ENCODE measurements at regions of chr7 and their contacts with region 1.

Region 1: DNA sequence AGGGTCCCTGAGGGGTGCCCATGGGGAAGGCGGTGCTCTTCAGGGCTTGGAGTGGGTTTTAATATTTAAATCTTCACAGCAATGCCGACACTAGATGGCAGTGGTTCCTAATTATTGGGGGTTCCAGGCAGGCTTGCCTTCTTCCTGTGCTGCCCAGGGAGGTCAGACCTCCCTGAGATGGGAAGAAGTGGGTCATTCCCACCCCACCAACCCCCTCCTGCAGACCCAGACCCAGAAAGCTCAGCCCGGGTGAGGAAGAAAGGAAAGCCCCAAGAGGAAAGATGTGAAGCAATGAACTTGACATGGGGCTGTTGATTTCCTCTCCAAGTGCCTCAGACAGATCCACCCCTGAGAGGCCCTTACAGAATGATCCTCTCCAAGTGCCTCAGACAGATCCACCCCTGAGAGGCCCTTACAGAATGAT is 85.1 kb upstream of the LANCL2 start:
- DNase-seq: peak; percentile 31 to 81
- H3K4me3 ChIP-seq: no peak overlapping the region
- H3K27ac ChIP-seq: no peak overlapping the region
- H3K4me1 ChIP-seq: no peaks in the 10 kb centered on the region
- H3K27me3 ChIP-seq: no peaks in the 10 kb centered on the region
- CTCF ChIP-seq: peak; percentile 30 to 85 (median 67)
- EP300 ChIP-seq: no peak
- POLR2A ChIP-seq: no peak
- RAD21 ChIP-seq: peak; percentile 95

Region 2: GRCh38 chr7:55206235-55207029 is 73.6 kb before region 1 on chr7:
- CTCF ChIA-PET with region 1: no interaction called
- POLR2A ChIA-PET with region 1: no interaction called
- DNase-seq: no peak
- H3K4me3 ChIP-seq: no peak overlapping the region
- H3K27ac ChIP-seq: no peak overlapping the region
- H3K4me1 ChIP-seq: no peaks in the 10 kb centered on the region
- H3K27me3 ChIP-seq: no peaks in the 10 kb centered on the region
- CTCF ChIP-seq: no peak
- EP300 ChIP-seq: no peak
- POLR2A ChIP-seq: no peak
- RAD21 ChIP-seq: no peak

Region 3: GRCh38 chr7:55415173-55415778 is 135.2 kb after region 1 on chr7:
- CTCF ChIA-PET with region 1: interaction called, 17 read pairs
- POLR2A ChIA-PET with region 1: no interaction called
- DNase-seq: peak; percentile 38 to 91
- H3K4me3 ChIP-seq: no peak overlapping the region
- H3K27ac ChIP-seq: no peak overlapping the region
- H3K4me1 ChIP-seq: no peaks in the 10 kb centered on the region
- H3K27me3 ChIP-seq: no peaks in the 10 kb centered on the region
- CTCF ChIP-seq: peak; percentile 66 to 78 (median 68)
- EP300 ChIP-seq: no peak
- POLR2A ChIP-seq: no peak
- RAD21 ChIP-seq: peak; percentile 73 to 83

Region 4: DNA sequence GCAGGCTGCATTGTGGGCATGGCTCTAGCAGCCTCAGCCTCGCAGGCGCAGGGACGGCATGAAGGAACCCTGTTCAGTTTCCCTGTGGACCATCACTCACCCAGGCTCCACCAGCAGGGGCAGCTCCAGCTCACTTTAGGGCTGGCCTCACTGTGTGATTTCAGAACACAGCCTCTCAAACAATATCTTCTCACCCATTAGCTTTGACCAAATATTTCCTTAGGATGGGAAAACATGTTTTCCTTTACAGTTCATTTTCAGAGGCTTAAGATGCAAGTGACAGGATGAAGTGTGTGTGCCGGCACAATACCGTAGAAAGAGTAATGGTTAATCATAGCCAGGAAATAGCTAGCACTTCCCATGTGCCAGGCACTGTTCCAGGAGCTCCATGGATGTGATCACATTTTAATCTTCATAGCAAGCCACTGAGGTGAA is 143.3 kb after region 1 on chr7:
- CTCF ChIA-PET with region 1: interaction called, 20 read pairs
- POLR2A ChIA-PET with region 1: no interaction called
- DNase-seq: no peak
- H3K4me3 ChIP-seq: no peak overlapping the region
- H3K27ac ChIP-seq: no peak overlapping the region
- H3K4me1 ChIP-seq: peaks cover 0 to 2% (median under 1%) of the 10 kb centered on the region in 4 experiments; a peak in 2 of 7 replicates
- H3K27me3 ChIP-seq: no peaks in the 10 kb centered on the region
- CTCF ChIP-seq: peak; percentile 12 to 42 (median 42); a peak in 3 of 4 replicates
- EP300 ChIP-seq: no peak
- POLR2A ChIP-seq: no peak
- RAD21 ChIP-seq: peak; percentile 34 to 39; a peak in 2 of 4 replicates

Region 5: GRCh38 chr7:55593515-55594318 is 313.7 kb after region 1 on chr7:
- CTCF ChIA-PET with region 1: interaction called, 11 read pairs
- POLR2A ChIA-PET with region 1: no interaction called
- DNase-seq: peak in 1 of 2 experiments; percentile 95
- H3K4me3 ChIP-seq: no peak overlapping the region
- H3K27ac ChIP-seq: no peak overlapping the region
- H3K4me1 ChIP-seq: no peaks in the 10 kb centered on the region
- H3K27me3 ChIP-seq: no peaks in the 10 kb centered on the region
- CTCF ChIP-seq: peak; percentile 75 to 94 (median 93)
- EP300 ChIP-seq: no peak
- POLR2A ChIP-seq: no peak
- RAD21 ChIP-seq: peak; percentile 72 to 78

Measured in H1 (cell line).